ENCODE measurements at regions of chr3 and their contacts with region 1.

Region 1: GRCh38 chr3:179562591-179563270 is at the start of gene ACTL6A:
- DNase-seq: peak; percentile 98
- H3K4me3 Mint-ChIP-seq: peak within 1 kb of the TSS; percentile 93
- H3K27ac Mint-ChIP-seq: peak within 1 kb of the TSS; percentile 99
- H3K4me1 Mint-ChIP-seq: peaks cover 34% of the 10 kb centered on the region
- H3K27me3 Mint-ChIP-seq: peaks cover 12% of the 10 kb centered on the region
- total RNA-seq, gene ACTL6A: 113 and 117 TPM in 2 replicates

Region 2: GRCh38 chr3:179071550-179072397 is 491.0 kb before region 1 on chr3 and contains the start of gene ZMAT3:
- intact Hi-C with region 1: loop called (anchors 1 kb)
- DNase-seq: peak; percentile 84
- H3K4me3 Mint-ChIP-seq: peak within 1 kb of the TSS; percentile 98
- H3K27ac Mint-ChIP-seq: peak within 1 kb of the TSS; percentile 95
- H3K4me1 Mint-ChIP-seq: peaks cover 43% of the 10 kb centered on the region
- H3K27me3 Mint-ChIP-seq: peaks cover 3% of the 10 kb centered on the region
- total RNA-seq, gene ZMAT3: 16.9 and 17.3 TPM in 2 replicates

Region 3: DNA sequence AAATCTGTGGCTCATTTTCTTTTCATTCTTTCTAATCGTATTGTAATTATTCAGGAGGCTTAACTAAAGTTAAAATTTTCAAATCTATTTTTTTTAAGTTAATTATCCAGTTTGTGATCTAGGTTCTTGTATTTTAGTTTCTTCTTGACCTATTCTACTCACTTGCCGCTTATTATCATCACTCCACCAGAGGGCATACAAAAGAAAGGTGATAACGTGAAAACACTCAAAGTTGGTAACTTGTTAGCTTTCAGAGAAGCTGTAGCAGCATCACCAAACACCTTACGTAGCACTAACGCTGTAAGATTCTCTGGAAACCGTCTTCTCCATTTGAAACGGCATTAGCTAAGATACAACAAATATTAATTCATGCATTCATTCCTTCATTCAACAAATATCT is 116.2 kb before region 1 on chr3:
- intact Hi-C with region 1: loop called (anchors 1 kb)
- DNase-seq: no peak
- H3K4me3 Mint-ChIP-seq: no peak overlapping the region
- H3K27ac Mint-ChIP-seq: no peak overlapping the region
- H3K4me1 Mint-ChIP-seq: peaks cover 32% of the 10 kb centered on the region
- H3K27me3 Mint-ChIP-seq: peaks cover 11% of the 10 kb centered on the region

Region 4: DNA sequence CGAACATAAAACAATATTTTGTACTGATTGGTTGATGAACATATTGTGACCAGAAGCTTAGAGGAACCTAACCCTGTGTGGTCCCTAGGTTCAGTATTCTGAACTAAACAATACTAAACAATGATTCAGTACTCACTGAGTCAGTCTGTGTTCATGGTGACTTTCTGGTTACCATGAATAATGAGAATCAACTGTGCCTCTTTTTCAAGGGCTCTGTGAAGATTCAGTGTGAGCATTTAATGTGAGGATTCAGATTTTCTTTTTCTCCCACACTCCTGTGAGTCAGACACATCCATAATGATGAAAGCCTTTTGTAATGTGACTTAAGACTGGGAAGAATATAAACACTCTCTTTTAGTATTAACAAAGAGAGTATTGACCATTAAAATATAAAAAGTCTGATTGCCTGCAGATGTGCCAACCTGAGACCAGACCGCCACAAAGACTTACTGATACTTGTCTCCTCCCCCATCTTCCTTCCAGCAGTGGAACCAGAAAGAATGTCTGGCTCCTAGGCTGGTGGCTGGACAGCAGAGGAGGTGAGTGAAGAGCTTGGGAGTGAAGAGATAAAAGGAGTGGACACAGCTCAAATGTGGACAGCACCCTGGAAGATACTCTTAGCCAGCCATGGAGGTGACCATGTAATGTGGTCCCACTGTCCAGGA is 17.6 kb before region 1 on chr3:
- intact Hi-C with region 1: no loop called
- DNase-seq: no peak
- H3K4me3 Mint-ChIP-seq: no peak overlapping the region
- H3K27ac Mint-ChIP-seq: no peak overlapping the region
- H3K4me1 Mint-ChIP-seq: no peaks in the 10 kb centered on the region
- H3K27me3 Mint-ChIP-seq: peaks cover 11% of the 10 kb centered on the region

Region 5: GRCh38 chr3:179604321-179605078 is 41.8 kb after region 1 on chr3 and contains the starts of genes MRPL47 and NDUFB5:
- intact Hi-C with region 1: loop called (anchors 1 kb)
- DNase-seq: peak; percentile 91
- H3K4me3 Mint-ChIP-seq: peak within 1 kb of the TSS; percentile 97
- H3K27ac Mint-ChIP-seq: peak within 1 kb of the TSS; percentile 99
- H3K4me1 Mint-ChIP-seq: peaks cover 36% of the 10 kb centered on the region
- H3K27me3 Mint-ChIP-seq: no peaks in the 10 kb centered on the region
- total RNA-seq, gene MRPL47: 65.1 and 65.5 TPM in 2 replicates
- total RNA-seq, gene NDUFB5: 81.5 and 86.1 TPM in 2 replicates

Region 6: DNA sequence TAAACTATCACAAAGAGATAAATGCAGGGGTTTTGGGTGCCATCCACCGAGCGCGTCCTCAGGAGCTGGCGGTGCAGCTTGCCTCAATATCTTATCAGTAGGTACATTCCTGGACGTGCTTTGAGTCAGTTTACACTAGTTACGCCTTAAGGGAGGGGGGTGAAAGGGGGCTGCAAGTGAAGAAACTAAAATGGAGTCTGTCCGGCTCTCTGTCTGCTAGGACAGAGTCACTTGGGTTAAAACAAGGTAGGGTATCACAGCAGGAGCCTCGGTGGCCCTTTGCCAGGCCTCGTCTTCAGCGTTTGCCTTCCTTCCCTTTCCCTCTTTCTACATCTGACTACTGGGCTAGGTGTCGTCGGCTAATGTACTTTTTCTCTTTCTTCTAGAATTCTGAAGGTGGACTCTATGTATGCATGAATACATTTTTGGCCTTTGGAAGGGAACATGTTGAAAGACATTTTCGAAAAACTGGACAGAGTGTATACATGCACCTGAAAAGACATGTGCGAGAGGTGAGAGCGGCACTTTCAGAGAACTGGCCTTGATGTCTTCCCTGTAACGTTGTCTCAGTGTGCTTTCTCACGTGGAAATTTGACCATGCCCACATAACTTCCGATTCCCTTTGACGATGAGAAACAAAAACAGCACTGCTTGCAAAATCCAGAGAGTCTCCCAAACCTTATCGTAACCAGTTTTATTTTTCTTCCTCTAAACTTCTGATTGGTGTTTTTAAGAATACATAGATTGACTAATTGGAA is 118.9 kb after region 1 on chr3:
- intact Hi-C with region 1: no loop called
- DNase-seq: no peak
- H3K4me3 Mint-ChIP-seq: no peak overlapping the region
- H3K27ac Mint-ChIP-seq: no peak overlapping the region
- H3K4me1 Mint-ChIP-seq: no peaks in the 10 kb centered on the region
- H3K27me3 Mint-ChIP-seq: no peaks in the 10 kb centered on the region

Region 7: DNA sequence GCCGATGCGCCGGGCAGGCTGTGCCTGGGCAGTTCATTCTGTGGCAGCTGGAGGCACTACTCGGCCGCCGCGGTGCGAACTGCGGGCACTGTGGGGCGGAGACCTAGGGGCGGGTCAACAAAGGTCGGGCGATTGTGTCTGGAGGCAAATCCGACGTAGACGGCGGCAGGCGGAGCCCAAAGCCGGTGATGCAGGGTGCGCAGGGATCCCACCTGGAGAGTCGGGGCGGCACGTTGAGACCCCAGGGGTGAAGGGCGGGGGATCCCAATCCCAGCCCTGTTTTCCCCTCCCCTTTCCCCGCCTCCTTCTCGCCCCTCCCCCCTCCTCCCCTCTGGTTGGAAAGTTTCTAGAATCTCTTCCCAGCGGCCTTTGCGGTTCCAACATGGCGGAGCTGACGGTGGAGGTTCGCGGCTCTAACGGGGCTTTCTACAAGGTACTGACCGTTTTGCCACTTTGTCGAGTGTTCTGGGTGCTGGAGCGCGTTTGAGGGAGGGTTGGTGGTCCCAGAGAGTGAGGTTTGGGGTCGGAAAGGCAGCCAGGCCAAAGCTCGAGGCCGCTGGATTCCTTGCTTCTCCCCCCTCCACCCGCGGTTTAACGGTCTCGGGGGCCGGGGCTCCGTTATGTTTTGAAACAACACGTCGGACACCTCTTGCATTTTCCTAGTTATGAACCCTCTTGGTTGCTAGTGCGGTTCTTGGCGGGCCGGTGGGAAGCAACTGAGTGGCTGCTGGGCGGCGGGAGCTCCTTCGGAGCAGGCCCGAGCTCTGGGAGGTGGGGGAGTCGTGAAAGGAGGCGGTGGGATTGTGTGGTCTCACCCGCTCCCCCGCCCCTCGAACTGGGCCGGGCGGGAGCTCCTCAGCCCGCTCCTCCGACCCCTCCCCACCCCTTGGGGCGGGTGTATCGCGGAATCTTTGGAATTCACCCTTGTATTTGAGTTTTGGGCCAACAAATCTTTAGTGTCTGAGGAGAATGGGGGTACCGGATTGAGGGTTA is 1349.9 kb after region 1 on chr3 and contains the start of gene FXR1:
- intact Hi-C with region 1: loop called (anchors 2 kb)
- DNase-seq: peak; percentile 76
- H3K4me3 Mint-ChIP-seq: peak within 1 kb of the TSS; percentile 91
- H3K27ac Mint-ChIP-seq: peak within 1 kb of the TSS; percentile 96
- H3K4me1 Mint-ChIP-seq: peaks cover 35% of the 10 kb centered on the region
- H3K27me3 Mint-ChIP-seq: no peaks in the 10 kb centered on the region
- total RNA-seq, gene FXR1: 140 and 141 TPM in 2 replicates

Region 8: GRCh38 chr3:181555681-181556080 is 1993.0 kb after region 1 on chr3:
- intact Hi-C with region 1: no loop called
- DNase-seq: no peak
- H3K4me3 Mint-ChIP-seq: no peak overlapping the region
- H3K27ac Mint-ChIP-seq: no peak overlapping the region
- H3K4me1 Mint-ChIP-seq: no peaks in the 10 kb centered on the region
- H3K27me3 Mint-ChIP-seq: no peaks in the 10 kb centered on the region

Measured in activated T-helper 1 cell treated with anti-CD3 and anti-CD28 coated beads, Interleukin-12 subunit alpha, Interleukin-12 subunit beta, Interleukin-2, Interleukin-4 antibody, amounts not matched to agents 30 ng/mL and 10 ng/mL and 1 ng/mL, durations not matched to agents 14 hours and 24 hours and 36 hours (primary cell).